MCF 10A (cell line): ENCODE measurements at regions of chr2 and their contacts with region 1.

Region 1: DNA sequence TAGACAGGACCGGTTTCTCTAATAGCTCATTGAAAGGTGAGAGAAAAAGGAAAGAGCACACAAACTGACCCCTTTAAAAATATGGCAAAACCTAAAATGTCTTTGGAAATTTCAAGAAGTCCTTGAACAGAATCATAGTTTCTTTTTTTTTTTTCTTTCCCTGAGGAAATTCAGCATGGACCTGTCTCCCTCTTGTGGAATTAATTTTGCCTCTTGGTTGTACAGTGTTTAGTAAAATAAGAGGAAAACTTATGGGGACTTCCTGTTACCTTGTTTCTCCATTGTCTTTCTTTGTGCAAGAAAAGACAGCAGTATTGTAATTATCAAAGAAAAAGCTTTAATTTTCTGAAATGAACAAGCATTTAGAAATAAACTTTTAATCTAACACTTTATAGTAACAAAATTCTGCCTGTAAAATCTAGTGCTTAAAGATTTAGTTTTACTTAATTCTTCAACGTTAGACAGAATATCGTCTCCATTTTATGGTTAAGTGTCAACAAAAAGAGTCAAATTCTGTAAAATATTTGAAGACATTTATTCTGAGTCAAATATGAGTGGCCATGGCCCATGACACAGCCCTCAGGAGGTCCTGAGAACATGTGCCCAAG is 176.3 kb upstream of the NABP1 start:
- DNase-seq: peak; percentile 51
- H3K4me3 Mint-ChIP-seq: no peak overlapping the region
- H3K27ac Mint-ChIP-seq: no peak overlapping the region
- H3K4me1 Mint-ChIP-seq: no peaks in the 10 kb centered on the region
- H3K27me3 Mint-ChIP-seq: no peaks in the 10 kb centered on the region
- CTCF ChIP-seq: peak; percentile 58

Region 2: DNA sequence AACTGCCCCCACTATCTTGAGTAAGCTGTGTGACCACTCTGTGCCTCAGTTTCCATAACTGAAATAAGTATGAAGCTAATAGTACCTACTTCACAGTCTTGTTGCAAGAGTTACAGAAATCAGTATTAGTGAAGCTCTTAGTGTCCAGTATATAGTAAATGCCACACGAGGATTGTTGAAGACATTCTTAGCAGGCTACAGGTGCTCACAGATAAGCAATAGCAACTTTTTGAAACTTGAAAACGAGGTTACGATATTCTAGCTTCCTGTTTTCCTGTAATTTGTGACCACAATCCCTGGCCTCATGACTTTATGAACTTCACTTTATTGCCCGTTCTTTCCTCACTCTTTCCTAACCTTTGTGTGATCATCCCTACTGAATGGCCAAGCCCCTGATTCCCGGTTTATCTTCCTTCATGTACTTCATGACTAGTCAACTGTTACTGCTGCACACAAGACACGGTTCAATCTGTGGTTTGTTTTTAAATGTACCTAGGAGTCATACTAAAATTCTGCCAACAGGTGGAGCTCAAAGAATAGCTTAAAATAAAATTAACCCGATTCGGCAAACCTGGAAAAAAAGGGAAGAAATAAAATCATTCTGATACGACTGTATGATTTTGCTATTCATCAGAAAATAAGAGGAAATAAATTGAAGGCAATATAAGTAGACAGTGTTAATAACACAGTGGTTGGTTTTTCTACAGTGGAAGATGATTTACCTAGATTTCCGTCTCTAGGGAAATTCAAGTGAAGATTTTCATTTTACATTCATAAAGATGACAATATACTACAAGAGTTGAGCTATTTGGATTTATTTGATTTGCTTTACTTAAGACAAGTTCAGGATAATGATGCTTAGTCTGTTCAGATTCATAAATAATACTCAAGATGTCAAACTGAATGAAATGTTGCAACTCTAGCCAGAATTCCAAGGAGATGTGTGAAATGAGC is 449.6 kb before region 1 on chr2:
- CTCF ChIA-PET with region 1: interaction called, 36 read pairs
- POLR2A ChIA-PET with region 1: interaction called, 3 read pairs
- intact Hi-C with region 1: loop called (anchors 1 kb)
- DNase-seq: peak; percentile 64
- H3K4me3 Mint-ChIP-seq: no peak overlapping the region
- H3K27ac Mint-ChIP-seq: no peak overlapping the region
- H3K4me1 Mint-ChIP-seq: peaks cover 10% of the 10 kb centered on the region
- H3K27me3 Mint-ChIP-seq: no peaks in the 10 kb centered on the region
- CTCF ChIP-seq: peak; percentile 59

Region 3: DNA sequence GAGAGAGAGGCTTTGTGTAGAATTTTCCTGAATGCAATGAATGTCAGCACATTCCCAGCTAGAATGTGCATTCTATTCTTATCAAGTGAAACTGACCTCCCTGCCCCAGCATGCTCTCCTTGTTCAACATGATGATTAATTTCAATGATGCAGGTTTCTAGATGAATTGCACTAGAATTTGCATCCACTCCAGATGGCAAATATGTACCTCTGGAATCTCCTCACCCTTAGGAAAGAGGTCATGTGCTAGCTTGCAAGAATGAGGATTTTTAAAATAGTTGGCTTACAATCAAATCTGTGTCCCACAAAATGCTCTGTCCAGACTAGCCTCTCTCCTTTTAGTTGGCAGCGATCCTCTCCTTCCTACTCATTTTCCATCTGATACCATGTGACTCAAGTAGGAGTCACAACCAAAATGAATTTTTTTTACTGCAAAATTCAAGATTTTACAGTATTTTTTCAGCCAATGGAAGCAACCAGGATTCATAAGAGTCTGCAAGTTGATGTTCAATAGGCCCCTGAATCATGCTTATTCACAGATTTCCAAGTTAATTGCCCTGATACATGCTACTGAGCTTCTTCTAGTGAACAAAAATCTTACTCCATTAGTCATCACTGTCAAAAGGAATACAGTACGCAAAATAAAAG is 329.8 kb before region 1 on chr2:
- CTCF ChIA-PET with region 1: interaction called, 222 read pairs
- POLR2A ChIA-PET with region 1: interaction called, 9 read pairs
- intact Hi-C with region 1: no loop called
- DNase-seq: peak; percentile 98
- H3K4me3 Mint-ChIP-seq: peak overlapping the region; percentile 33
- H3K27ac Mint-ChIP-seq: peak overlapping the region; percentile 79
- H3K4me1 Mint-ChIP-seq: peaks cover 61% of the 10 kb centered on the region
- H3K27me3 Mint-ChIP-seq: no peaks in the 10 kb centered on the region
- CTCF ChIP-seq: no peak

Region 4: DNA sequence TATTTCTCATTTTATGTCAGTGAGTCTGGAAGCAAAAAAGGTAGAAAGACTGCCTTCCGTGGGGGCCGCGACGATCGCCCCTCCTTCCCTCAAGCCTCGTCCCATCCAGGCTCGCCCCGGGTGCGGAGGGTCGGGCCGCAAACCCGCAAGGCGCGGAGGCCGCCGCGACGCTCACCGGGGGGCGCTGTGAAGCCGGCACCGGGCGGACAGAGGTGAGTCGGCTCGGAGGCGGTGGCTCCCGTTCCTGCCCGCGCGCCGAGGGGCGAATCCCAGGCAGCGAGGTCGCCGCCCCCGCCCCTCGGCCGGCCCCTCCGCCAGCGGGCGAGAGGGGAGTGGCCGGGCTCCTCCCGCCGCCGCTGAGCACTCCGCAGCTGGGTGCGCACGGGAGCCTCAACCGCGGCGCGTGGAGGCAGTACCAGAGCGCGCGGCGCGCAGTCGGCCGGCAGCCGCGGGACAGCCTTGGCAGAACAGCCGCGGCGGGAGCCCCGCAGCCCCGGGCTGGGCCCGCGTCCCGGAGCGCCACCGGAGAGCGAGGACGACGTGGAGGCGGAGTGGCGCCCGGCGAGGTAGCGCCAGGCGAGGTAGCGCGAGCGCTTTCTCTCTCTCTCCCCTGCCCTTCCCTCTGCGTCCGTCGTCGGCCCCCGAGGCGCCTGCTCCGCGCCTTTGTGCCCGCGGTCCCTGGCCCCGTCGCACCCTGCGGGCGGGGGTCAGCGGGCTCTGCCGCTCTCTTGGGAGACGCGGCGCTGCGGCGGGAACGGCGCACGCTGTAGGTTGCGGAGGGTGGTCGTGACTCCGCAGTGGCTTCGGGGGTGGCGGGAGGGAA is 256.4 kb before region 1 on chr2 and contains the start of gene MYO1B:
- CTCF ChIA-PET with region 1: interaction called, 11 read pairs
- POLR2A ChIA-PET with region 1: no interaction called
- intact Hi-C with region 1: loop called (anchors 1 kb)
- DNase-seq: peak; percentile 90
- H3K4me3 Mint-ChIP-seq: peak within 1 kb of the TSS; percentile 91
- H3K27ac Mint-ChIP-seq: peak within 1 kb of the TSS; percentile 90
- H3K4me1 Mint-ChIP-seq: peaks cover 35% of the 10 kb centered on the region
- H3K27me3 Mint-ChIP-seq: no peaks in the 10 kb centered on the region
- CTCF ChIP-seq: peak; percentile 47
- total RNA-seq, gene MYO1B: 204 and 241 TPM in 2 replicates

Region 5: DNA sequence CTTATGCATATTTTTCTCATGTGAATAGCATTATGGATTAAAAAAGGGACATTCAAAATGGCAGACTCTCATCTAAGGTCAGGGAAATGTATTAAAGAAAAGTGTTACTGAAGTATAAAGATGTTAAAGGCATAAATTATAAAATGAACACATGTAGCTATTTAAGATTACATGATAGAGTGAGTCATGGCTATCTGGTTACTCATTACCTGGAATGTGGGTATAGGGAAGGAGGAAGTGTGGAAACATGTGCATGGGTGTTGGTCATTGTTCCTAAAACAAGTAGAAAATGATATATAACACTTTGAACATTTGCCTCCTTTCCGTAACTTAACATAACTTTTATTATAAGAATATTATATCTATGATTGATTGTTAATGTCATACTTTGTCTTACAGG is 190.0 kb before region 1 on chr2:
- CTCF ChIA-PET with region 1: no interaction called
- POLR2A ChIA-PET with region 1: no interaction called
- intact Hi-C with region 1: no loop called
- DNase-seq: peak; percentile 86
- H3K4me3 Mint-ChIP-seq: no peak overlapping the region
- H3K27ac Mint-ChIP-seq: peak overlapping the region; percentile 72
- H3K4me1 Mint-ChIP-seq: peaks cover 38% of the 10 kb centered on the region
- H3K27me3 Mint-ChIP-seq: no peaks in the 10 kb centered on the region
- CTCF ChIP-seq: no peak

Region 6: GRCh38 chr2:191421950-191422349 is 79.7 kb before region 1 on chr2:
- CTCF ChIA-PET with region 1: interaction called, 11 read pairs
- POLR2A ChIA-PET with region 1: no interaction called
- intact Hi-C with region 1: loop called (anchors 10 kb)
- DNase-seq: no peak
- H3K4me3 Mint-ChIP-seq: no peak overlapping the region
- H3K27ac Mint-ChIP-seq: no peak overlapping the region
- H3K4me1 Mint-ChIP-seq: no peaks in the 10 kb centered on the region
- H3K27me3 Mint-ChIP-seq: no peaks in the 10 kb centered on the region
- CTCF ChIP-seq: no peak

Region 7: DNA sequence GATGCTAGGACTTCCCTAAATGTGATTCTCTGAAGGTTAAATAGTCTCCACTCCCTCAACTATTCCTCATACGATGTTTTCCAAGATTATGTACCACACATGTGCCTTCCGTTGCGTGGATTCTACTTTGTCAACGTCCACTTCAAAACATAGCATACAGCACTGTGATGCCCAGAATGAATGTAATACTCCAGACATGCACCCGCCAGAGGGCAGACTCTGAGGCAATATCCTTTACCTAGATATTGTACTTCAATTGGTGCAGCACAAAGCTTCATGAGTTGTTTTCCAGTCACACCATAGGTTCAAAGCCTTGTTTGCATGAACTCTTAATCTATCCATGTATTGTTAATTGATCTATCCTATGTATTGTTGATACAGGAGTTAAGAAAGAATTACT is 24.8 kb before region 1 on chr2:
- CTCF ChIA-PET with region 1: no interaction called
- POLR2A ChIA-PET with region 1: no interaction called
- intact Hi-C with region 1: no loop called
- DNase-seq: no peak
- H3K4me3 Mint-ChIP-seq: no peak overlapping the region
- H3K27ac Mint-ChIP-seq: no peak overlapping the region
- H3K4me1 Mint-ChIP-seq: no peaks in the 10 kb centered on the region
- H3K27me3 Mint-ChIP-seq: no peaks in the 10 kb centered on the region
- CTCF ChIP-seq: no peak

Region 8: DNA sequence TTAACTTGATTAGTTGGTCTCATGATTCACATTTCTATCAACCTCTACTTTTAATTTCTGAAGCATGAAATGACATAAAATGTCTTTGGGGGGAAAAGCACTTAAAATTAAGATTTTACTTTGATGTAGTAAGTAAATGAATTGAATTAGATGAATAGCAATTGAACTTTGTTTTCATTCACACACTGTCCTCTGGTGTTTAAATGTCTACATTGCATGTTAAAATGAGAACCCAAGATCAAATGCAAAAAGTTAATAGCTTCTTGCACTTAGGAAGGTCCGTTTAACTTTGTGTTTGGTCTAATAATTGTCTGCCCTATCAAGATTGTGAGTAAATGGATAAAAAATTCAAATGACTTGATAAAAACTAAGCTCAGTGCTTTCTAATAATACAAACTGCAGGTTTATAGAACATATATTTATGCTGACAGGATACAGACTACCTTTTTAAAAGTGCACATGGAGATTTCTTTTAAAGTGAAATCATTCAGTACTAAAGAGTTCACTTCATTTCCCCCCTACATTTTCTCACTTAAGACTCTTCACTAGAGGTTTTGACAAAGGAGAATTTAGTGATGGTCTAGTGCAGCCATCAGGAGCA is 20.0 kb after region 1 on chr2:
- CTCF ChIA-PET with region 1: interaction called, 64 read pairs
- POLR2A ChIA-PET with region 1: interaction called, 3 read pairs
- intact Hi-C with region 1: no loop called
- DNase-seq: peak; percentile 57
- H3K4me3 Mint-ChIP-seq: no peak overlapping the region
- H3K27ac Mint-ChIP-seq: no peak overlapping the region
- H3K4me1 Mint-ChIP-seq: no peaks in the 10 kb centered on the region
- H3K27me3 Mint-ChIP-seq: no peaks in the 10 kb centered on the region
- CTCF ChIP-seq: peak; percentile 51

Region 9: DNA sequence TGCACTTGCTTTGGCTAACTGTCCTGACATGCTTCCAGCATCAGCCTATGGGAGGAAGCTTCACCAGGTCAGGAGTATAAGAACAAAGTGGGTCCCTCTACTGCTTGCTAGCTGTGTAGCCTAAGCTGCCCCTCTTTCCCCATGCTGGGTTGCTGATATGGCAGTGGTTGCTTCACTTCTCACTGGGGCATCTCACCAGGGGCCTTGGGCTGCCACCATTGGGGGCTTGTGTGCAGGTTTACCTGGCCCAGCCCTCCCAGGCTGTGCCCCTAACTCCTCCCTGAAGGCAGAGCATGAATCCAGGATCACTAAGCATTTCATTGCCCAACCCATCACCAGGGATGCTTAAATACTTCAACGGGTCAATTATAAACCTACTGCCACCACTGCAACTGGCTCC is 1510.2 kb after region 1 on chr2:
- CTCF ChIA-PET with region 1: no interaction called
- POLR2A ChIA-PET with region 1: no interaction called
- intact Hi-C with region 1: no loop called
- DNase-seq: no peak
- H3K4me3 Mint-ChIP-seq: no peak overlapping the region
- H3K27ac Mint-ChIP-seq: no peak overlapping the region
- H3K4me1 Mint-ChIP-seq: no peaks in the 10 kb centered on the region
- H3K27me3 Mint-ChIP-seq: no peaks in the 10 kb centered on the region
- CTCF ChIP-seq: no peak